ENCODE measurements at regions of chr11 and their contacts with region 1.

Region 1: GRCh38 chr11:16613512-16614381 is 124.7 kb upstream of the C11orf58 start:
- DNase-seq: peak; percentile 91
- ATAC-seq: peak; percentile 97

Region 2: GRCh38 chr11:15327786-15328231 is 1285.9 kb before region 1 on chr11:
- intact Hi-C with region 1: loop called (anchors 5 kb)
- DNase-seq: no peak
- ATAC-seq: peak; percentile 77

Region 3: GRCh38 chr11:15770798-15771414 is 842.8 kb before region 1 on chr11:
- intact Hi-C with region 1: loop called (anchors 5 kb)
- DNase-seq: no peak
- ATAC-seq: no peak

Region 4: GRCh38 chr11:15819679-15820286 is 794.0 kb before region 1 on chr11:
- intact Hi-C with region 1: loop called (anchors 5 kb)
- DNase-seq: peak; percentile 88
- ATAC-seq: peak; percentile 94

Region 5: GRCh38 chr11:15901054-15901453 is 712.7 kb before region 1 on chr11:
- intact Hi-C with region 1: loop called (anchors 5 kb)
- DNase-seq: no peak
- ATAC-seq: peak; percentile 79

Region 6: GRCh38 chr11:16421826-16422225 is 191.9 kb before region 1 on chr11:
- intact Hi-C with region 1: no loop called
- DNase-seq: no peak
- ATAC-seq: no peak